ENCODE measurements at regions of chr10 and their contacts with region 1.

Region 1: DNA sequence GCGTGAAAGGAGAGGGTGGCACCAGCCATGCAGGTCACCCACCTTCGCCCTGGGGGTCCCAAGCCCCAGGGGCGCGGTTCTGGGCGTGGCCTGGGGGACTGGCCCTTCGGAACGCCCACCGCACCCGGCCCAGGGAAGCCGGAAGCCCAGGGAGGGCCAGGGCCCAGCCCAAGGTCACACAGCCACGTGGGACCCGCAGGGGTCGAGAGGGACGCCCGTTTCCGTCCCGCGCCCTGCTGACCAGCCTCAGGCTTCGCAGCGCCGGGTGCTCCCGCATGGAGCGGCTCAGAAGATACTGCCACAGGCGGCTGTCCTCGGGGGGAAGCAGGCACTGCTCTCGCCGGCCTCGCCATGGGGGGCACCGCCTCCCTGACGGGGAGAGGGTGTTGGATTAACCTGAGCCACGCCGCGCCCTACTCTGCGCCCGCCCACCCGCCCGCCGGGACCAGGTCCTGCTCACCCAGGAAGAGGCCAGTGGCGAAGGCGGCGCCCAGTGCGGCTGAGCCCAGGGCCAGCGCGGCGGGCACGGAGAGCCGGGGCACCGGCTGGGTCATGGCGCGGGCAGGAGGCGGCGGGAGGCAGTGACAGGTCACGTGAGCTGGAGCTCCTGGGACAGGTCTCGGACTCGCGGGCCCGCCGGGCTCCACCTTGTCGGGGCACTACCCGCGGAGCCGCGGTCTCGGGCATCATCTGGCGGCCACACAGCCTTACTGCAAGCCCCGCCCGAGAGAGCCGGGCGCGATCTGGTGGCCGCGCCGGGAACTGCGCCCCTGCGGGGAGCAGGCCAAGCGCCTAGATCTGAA is at the start of gene COMTD1:
- DNase-seq: peak; percentile 96
- ATAC-seq: peak; percentile 82
- total RNA-seq, gene COMTD1: 34.0 TPM

Region 2: GRCh38 chr10:74249865-74250264 is 985.7 kb before region 1 on chr10:
- intact Hi-C with region 1: loop called (anchors 5 kb)
- DNase-seq: no peak
- ATAC-seq: no peak

Region 3: GRCh38 chr10:75111367-75111906 is 124.1 kb before region 1 on chr10 and contains the start of gene SAMD8:
- intact Hi-C with region 1: loop called (anchors 5 kb)
- DNase-seq: peak; percentile 98
- ATAC-seq: peak; percentile 94
- total RNA-seq, gene SAMD8: 23.3 TPM

Region 4: GRCh38 chr10:75187961-75188426 is 47.6 kb before region 1 on chr10:
- intact Hi-C with region 1: loop called (anchors 5 kb)
- DNase-seq: no peak
- ATAC-seq: peak; percentile 47

Measured in Right ventricle myocardium superior (tissue), 1 donor.